RWPE1 (cell line): ENCODE measurements at regions of chr2 and their contacts with region 1.

Region 1: DNA sequence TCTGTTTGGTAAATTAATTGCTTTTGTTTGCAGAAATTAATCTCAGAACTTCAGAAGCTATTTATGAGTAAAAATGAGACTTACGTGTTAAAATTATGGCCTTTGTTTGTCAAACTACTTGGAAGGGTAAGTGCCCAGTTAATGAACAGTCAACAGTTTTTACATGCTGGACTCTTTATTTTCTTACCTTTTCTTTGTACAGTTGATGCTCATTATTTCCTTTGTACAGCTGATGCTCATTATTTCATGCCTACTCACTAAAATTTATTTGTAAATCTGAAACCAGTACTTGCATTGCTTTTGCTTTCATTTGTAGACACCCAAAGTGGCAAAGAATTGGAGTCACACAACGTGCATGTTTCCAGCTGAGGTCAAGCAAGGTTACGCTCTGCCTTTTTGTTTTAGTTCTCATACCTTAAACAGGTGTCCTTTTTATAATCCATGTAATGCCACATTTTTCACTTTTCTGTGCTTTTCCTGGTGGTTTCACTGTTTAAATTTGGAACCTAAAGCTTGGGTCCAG is 13.3 kb downstream of the RIF1 start:
- DNase-seq: no peak
- H3K27ac ChIP-seq: no peak overlapping the region
- CTCF ChIP-seq: no peak

Region 2: DNA sequence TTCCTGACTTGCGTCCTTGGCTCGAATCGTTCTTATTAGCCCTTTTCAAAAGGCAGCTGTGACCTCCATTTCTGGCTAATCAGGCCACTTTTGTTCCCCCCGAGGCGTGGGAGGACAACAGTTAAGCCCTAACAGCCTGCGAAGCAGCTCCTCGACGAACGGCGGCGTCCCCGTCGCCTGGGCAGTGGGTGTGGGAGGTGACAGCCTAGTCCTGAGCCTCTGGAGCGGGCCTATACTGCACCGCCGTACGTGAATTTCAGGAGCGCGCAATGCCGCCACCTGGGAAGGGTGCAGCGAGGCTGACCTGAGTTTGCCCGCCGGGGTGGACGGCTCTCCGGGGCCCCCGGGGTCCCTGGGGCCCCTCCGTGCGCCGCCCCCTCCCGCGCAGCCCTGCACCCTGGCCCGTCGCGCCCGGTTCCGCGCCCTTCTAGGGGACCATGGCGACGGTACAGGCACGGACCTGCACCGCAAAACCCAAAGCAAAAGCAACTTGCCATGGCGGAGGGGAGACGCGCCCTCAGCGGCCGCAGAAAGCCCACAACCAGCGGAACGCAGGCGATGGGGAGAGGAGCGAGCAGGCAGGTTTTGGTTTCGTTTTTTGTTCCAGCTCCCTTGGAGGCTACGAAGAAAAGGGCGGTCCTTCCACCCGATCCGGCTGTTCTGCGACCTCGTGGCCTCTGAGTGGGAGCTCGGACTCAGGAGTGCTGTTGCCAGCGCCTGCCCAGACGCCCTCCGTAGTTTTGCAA is 161.6 kb before region 1 on chr2 and contains the start of gene RBM43:
- CTCF ChIA-PET with region 1: no interaction called
- POLR2A ChIA-PET with region 1: no interaction called
- DNase-seq: peak; percentile 81
- H3K27ac ChIP-seq: peak within 1 kb of the TSS; percentile 94
- CTCF ChIP-seq: no peak

Region 3: GRCh38 chr2:152155209-152155608 is 732.2 kb after region 1 on chr2:
- CTCF ChIA-PET with region 1: no interaction called
- POLR2A ChIA-PET with region 1: interaction called, 10 read pairs
- DNase-seq: no peak
- H3K27ac ChIP-seq: no peak overlapping the region
- CTCF ChIP-seq: no peak